Sciatic nerve (tissue), 2 donors: ENCODE measurements at regions of chr4 and their contacts with region 1.

Region 1: DNA sequence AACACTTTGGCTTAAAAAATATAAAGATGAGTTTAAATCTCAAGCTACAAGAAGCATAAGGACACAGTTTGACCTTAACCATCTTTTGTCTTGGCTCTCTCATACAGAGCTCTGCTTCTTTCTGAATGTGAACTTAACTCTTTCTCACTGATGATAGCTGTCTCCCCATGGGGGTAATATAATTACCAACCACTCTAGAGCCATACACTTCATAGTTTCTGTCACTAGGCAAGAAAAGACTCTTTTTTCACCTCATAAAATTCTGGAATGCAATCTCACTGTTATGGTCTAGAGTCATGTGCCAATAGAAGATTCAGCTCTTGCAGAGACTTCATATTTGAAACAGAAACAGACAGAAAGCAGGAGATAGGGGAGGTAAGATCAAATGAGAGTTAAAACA is 481.7 kb upstream of the AGA start:
- DNase-seq: no peak
- ATAC-seq: no peak

Region 2: DNA sequence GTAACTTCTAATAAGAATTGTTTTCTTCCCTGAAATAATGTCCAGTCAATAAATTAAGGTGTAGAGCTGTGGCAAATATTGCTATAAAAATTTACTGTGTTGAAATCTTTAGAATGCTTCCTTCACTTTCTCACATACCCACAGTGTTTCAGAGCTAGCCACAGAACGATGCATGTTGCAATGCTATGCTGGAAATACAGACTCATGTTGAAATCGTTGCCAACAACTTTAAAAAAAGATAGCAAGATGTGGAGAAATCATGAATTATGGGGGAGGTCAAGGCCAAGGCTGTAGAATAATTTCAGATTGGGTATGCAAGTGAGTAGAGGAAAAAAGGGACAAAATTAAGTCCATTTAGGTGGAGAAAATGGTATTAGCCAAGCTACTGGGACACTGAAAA is 1336.0 kb before region 1 on chr4:
- intact Hi-C with region 1: loop called (anchors 5 kb)
- DNase-seq: no peak
- ATAC-seq: no peak

Region 3: GRCh38 chr4:177728361-177729152 is 195.3 kb before region 1 on chr4:
- intact Hi-C with region 1: no loop called
- DNase-seq: no peak
- ATAC-seq: no peak

Region 4: DNA sequence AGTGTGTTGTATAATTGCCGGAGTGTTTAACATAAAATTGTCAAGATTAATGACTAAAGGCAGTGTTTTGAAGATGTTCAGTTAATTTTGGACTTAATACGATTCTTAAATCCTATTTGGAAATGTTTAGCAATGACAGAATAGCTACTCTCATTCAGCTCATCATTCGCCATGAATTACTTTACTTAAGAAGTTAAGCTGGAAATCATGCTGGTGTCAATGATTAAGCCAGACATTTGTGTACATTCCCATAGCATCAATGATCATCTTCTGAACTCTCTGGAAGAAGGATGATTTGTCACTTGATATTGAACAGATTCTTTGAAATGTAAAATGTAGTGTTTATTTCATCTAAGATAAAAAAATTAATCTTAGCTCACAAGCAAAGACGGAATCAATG is 33.7 kb after region 1 on chr4:
- intact Hi-C with region 1: no loop called
- DNase-seq: no peak
- ATAC-seq: no peak